Prostate gland (tissue), 2 donors: ENCODE measurements at regions of chr20 and their contacts with region 1.

Region 1: DNA sequence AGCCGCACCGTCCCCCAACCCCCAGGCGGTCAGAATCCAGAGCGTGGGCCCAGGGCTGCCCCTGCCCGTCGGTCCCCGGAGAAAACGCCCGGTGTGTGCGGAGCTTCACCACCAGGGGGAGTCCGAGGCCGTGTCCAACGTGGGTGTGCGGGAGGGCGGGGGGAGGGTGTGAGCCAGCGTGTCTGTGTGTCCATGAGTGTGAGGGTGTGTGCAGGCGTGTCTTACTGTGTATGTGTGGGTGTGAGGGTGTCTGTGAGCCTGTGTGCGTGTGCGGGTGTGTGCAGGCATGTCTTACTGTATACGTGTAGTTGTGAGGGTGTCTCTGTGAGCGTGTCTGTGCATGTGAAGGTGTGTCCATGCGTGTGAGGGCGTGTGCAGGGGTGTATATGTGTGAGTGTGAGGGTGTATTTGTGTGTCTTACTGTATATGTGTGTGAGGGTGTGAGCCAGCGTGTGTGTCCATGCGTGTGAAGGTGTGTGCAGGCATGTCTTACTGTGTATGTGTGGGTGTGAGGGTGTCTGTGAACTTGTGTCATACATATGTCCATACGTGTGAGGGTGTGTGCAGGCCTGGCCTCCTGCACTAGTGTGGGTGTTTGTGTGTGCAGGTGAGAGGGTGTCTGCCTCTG is 24.6 kb upstream of the GATA5 start:
- DNase-seq: peak; percentile 52
- H3K4me3 ChIP-seq: no peak overlapping the region
- H3K27ac ChIP-seq: no peak overlapping the region
- H3K4me1 ChIP-seq: peaks cover 9% of the 10 kb centered on the region
- H3K27me3 ChIP-seq: no peaks in the 10 kb centered on the region
- CTCF ChIP-seq: peak; percentile 67 to 97 (median 91)
- POLR2A ChIP-seq: no peak

Region 2: DNA sequence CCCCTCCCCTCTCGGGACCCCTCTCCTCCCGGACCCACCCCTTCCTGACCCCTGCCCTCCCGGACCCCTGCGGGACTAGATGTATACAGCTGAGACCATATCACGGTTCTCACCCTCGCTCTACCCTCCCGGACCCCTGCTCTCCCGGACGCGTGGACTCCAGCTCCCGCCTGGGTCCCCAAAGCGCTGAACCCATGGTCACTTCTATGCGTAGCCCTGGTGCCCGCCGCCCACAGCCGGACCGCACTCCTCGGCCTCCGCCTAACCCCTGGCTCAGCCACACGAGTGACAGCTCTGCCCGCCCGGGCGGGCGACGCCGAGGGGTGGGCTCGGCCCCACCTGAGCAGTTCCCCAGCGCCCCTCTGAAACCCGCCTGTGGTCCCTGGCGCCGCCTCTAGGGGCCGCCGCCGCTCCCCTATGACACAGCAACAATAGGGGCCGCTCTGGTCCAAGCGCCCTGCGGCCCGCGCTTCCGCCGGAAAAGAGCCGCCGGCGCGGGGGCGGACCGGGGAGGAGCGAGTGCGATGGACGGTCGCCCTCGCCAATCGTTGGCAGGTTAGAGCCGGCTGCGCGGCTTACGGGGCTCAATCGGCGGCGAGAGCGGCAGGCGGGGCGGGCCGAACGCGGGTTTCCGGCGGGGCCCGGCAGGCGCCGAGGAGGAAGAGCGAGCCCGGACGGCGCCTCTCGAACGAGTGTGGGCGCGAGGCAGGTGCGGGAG is 197.9 kb before region 1 on chr20 and contains the start of gene ADRM1:
- intact Hi-C with region 1: loop called (anchors 10 kb)
- DNase-seq: peak; percentile 95
- H3K4me3 ChIP-seq: peak within 1 kb of the TSS; percentile 84 to 91
- H3K27ac ChIP-seq: peak within 1 kb of the TSS; percentile 98 to 99
- H3K4me1 ChIP-seq: peaks cover 25% of the 10 kb centered on the region
- H3K27me3 ChIP-seq: no peaks in the 10 kb centered on the region
- CTCF ChIP-seq: peak; percentile 95 to 99 (median 98)
- POLR2A ChIP-seq: peak; percentile 57
- total RNA-seq, gene ADRM1: 149 to 207 TPM

Region 3: GRCh38 chr20:62339647-62340070 is 160.7 kb before region 1 on chr20:
- intact Hi-C with region 1: no loop called
- DNase-seq: no peak
- H3K4me3 ChIP-seq: no peak overlapping the region
- H3K27ac ChIP-seq: peak overlapping the region in 1 of 2 donors; percentile 59
- H3K4me1 ChIP-seq: no peaks in the 10 kb centered on the region
- H3K27me3 ChIP-seq: no peaks in the 10 kb centered on the region
- CTCF ChIP-seq: no peak
- POLR2A ChIP-seq: no peak

Region 4: DNA sequence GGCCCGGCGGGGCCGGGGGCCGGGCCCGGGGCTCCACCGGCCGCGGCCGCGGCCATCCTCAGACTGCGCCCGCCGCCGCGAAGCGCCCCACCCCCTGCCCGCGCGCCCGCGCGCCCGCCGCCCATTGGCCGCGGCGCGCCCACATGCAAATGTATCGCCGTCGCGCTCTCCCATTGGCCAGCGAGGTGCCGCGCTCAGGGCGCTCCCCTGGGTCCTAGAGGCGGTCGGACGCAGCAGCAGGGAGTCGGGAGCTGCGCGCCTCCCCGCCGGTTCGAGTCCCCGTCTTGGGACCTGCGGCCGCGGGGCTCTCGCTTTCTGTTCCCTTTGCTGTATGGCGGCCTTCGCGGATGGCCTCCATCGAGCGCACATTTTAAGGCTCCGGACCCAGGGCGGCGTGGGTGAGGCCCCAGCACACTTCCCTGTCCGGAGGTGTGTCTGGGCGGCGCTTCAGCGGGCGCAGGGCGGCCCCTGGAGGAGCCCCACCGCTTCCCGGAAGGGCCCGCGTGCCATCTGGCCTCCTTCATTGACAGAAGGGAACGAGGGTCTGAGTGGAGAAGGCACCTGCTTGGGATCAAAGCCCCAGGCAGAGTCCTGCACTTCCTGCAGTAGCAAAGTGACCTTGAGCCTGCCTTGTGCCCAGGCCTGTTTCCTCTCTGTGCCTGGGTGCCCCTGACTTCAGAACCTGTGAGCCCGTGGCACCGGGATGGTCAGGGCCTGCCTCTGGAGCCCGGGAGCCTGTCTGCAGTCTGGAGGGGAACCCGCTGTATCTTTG is 92.9 kb before region 1 on chr20 and contains the start of gene CABLES2:
- intact Hi-C with region 1: loop called (anchors 5 kb)
- DNase-seq: peak; percentile 94
- H3K4me3 ChIP-seq: peak within 1 kb of the TSS; percentile 60 to 63
- H3K27ac ChIP-seq: peak within 1 kb of the TSS in 1 of 2 donors; percentile 36
- H3K4me1 ChIP-seq: peaks cover 23% of the 10 kb centered on the region
- H3K27me3 ChIP-seq: no peaks in the 10 kb centered on the region
- CTCF ChIP-seq: peak in 2 of 4 experiments; percentile 60 to 62
- POLR2A ChIP-seq: peak; percentile 28
- total RNA-seq, gene CABLES2: 4.1 to 31.3 TPM

Region 5: DNA sequence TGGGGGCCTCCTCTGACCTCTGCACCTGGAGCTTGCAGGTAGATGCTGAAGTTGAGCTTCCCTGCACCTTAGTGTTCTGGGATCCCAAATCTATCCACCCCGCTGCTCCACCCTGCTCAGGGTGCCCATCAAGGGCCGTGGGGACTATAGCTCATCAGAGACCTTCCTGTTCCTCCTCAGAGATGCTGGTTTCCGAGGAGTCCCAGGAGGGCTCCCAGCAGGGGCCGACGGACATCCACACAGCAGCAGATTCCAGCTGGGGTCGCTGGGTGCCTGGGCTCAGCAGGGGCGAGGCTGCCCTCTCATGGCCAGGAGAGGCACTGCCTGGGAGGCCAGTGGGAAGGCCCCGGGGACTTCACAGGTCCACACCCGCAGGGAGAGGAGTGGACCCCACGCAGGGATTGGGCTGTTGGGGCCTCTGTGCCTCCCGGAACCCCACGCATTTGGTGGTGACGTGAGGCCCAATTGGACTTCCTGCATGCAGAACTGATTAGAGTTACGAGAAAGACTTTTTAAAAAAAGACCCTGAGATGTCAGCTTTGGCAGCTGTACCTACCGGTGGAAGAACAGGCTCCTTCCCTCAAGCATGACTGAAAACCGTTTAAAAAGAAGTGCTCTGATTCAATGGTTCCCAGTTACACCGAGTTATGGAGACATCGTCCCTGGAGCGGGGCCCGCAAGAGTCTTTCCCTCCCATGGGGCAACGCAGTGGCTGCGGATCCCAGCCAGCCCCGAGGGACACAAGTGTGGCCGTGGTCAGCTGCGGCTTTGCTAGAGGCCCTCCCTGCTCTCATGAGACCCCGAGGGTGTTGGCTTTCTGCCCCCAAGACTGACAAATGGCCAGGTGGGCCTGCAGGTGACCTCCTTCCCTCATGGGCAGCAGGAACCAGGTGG is 116.6 kb after region 1 on chr20:
- intact Hi-C with region 1: loop called (anchors 1 kb)
- DNase-seq: peak; percentile 45
- H3K4me3 ChIP-seq: no peak overlapping the region
- H3K27ac ChIP-seq: no peak overlapping the region
- H3K4me1 ChIP-seq: no peaks in the 10 kb centered on the region
- H3K27me3 ChIP-seq: no peaks in the 10 kb centered on the region
- CTCF ChIP-seq: peak; percentile 76 to 97 (median 86)
- POLR2A ChIP-seq: no peak

Region 6: DNA sequence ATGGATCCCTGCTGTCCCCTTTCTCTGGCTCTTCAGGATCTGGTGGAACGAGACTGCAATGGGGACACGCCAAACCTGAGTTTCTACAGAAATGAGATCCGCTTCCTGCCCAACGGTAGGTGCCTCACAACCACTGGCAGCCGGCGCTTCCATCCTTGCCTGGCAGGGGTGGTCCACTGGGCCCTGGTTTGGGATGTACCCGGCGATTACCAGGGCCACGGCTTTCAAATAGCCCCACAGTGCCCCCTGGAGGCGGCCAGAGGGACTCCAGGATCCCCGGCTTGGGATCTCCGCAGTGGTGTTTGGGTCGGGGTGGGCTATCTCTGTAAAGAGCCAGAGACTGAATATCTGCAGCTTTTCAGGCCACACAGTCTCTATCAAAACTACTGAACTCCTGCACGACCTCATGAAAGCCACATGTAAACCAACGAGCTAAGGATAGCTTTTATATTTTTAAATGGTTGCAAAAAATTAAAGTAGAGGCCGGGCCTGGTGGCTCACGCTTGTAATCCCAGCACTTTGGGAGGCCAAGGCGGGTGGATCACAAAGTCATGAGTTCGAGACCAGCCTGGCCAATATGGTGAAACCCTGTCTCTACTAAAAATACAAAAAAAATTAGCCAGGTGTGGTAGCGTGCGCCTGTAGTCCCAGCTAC is 308.0 kb after region 1 on chr20:
- intact Hi-C with region 1: loop called (anchors 10 kb)
- DNase-seq: no peak
- H3K4me3 ChIP-seq: no peak overlapping the region
- H3K27ac ChIP-seq: no peak overlapping the region
- H3K4me1 ChIP-seq: no peaks in the 10 kb centered on the region
- H3K27me3 ChIP-seq: no peaks in the 10 kb centered on the region
- CTCF ChIP-seq: peak; percentile 67 to 81 (median 78)
- POLR2A ChIP-seq: no peak